ENCODE measurements at regions of chr7 and their contacts with region 1.

Region 1: GRCh38 chr7:157273208-157274093 is 63.4 kb upstream of the DNAJB6 start:
- DNase-seq: peak; percentile 62
- H3K4me3 ChIP-seq: no peak overlapping the region
- H3K27ac ChIP-seq: no peak overlapping the region
- H3K27me3 ChIP-seq: no peaks in the 10 kb centered on the region
- CTCF ChIP-seq: peak; percentile 98

Region 2: GRCh38 chr7:156969972-156970420 is 303.5 kb before region 1 on chr7:
- CTCF ChIA-PET with region 1: interaction called, 67 read pairs
- POLR2A ChIA-PET with region 1: no interaction called
- DNase-seq: no peak
- H3K4me3 ChIP-seq: no peak overlapping the region
- H3K27ac ChIP-seq: no peak overlapping the region
- H3K27me3 ChIP-seq: no peaks in the 10 kb centered on the region
- CTCF ChIP-seq: peak; percentile 33; the same call in 1 of the 2 replicates

Region 3: DNA sequence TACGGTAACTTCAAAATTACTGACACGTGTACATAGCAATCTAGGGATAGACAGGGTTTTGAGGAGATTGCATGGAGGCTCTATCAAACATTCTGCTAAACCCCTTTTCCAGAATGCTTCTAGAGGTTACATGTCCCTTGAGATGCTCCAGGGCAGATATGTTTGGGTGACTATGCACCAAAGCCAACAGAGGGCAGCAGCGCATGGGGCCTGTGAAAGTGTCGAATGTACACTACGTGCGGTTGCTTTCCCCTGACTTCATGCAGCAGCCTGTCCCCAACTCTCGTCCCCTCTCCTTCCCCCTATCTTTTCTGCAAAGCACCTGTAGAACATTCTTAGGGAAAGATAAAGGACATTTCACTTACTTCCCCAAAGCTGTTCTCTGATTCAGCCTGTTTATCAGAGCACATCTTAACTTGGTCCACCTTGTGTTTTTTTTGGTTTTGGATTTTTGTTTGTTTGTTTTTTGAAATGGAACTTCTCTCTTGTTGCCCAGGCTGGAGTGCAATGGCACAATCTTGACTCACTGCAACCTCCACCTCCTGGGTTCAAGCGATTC is 44.5 kb before region 1 on chr7:
- CTCF ChIA-PET with region 1: interaction called, 10 read pairs
- POLR2A ChIA-PET with region 1: no interaction called
- DNase-seq: no peak
- H3K4me3 ChIP-seq: no peak overlapping the region
- H3K27ac ChIP-seq: no peak overlapping the region
- H3K27me3 ChIP-seq: no peaks in the 10 kb centered on the region
- CTCF ChIP-seq: peak; percentile 59

Region 4: DNA sequence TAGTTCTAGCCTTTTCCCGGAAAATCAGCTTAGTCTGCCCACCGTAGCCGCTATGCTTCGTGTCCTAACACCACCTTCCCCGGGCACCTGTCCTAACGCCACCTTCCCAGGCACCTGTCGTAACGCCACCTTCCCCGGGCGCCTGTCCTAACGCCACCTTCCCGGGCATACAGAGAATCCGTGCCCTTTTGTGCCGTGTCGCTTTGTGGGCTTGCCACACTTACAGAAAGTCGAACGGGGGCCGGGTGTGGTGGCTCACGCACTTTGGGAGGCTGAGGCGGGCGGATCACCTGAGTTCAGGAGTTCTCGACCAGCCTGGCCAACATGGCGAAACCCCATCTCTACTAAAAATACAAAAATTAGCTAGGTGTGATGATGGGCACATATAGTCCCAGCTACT is 10.3 kb before region 1 on chr7:
- CTCF ChIA-PET with region 1: interaction called, 12 read pairs
- POLR2A ChIA-PET with region 1: no interaction called
- DNase-seq: no peak
- H3K4me3 ChIP-seq: no peak overlapping the region
- H3K27ac ChIP-seq: no peak overlapping the region
- H3K27me3 ChIP-seq: no peaks in the 10 kb centered on the region
- CTCF ChIP-seq: no peak

Region 5: GRCh38 chr7:157312941-157313340 is 39.5 kb after region 1 on chr7:
- CTCF ChIA-PET with region 1: interaction called, 14 read pairs
- POLR2A ChIA-PET with region 1: no interaction called
- DNase-seq: no peak
- H3K4me3 ChIP-seq: no peak overlapping the region
- H3K27ac ChIP-seq: no peak overlapping the region
- H3K27me3 ChIP-seq: no peaks in the 10 kb centered on the region
- CTCF ChIP-seq: no peak

Region 6: DNA sequence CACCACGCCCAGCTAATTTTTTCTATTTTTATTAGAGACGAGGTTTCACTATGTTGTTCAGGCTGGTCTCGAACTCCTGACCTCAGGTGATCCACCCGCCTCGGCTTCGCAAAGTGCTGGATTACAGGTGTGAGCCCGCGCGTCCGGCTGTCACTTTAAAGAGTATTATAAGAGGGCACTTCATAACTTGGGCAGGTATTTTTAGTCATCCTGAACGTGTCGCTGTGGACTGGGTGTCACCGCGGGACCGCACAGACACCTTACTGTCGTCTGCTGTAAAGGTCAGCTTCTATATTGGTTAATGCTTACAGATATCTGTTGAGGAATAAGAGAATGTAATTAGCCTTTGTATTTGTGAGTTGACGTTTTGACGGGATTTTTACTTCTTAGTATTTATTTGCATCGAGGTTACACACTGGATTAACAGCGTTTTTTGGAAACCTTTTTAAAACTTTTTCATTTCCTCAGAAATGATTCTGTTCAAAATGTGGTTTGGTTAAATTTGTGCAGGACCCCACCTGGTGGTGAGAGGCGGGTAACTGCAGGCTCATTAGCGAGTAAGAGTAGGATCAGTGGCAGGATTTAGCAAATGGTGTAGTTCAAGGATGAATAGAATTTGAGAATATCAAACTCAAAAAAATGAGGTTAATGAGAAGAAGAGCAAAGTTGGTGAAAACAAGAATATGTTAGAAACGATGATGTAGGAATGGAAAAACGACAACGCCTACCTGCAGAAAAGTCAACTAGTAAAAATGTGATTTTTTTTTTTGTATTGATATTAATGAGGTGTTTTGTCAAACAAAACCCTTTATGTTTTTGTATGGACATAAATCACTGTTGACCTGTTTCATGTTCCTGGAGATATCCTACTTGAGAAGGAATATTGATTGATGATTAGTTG is 66.6 kb after region 1 on chr7:
- CTCF ChIA-PET with region 1: interaction called, 19 read pairs
- POLR2A ChIA-PET with region 1: no interaction called
- DNase-seq: no peak
- H3K4me3 ChIP-seq: peak overlapping the region; percentile 11
- H3K27ac ChIP-seq: no peak overlapping the region
- H3K27me3 ChIP-seq: no peaks in the 10 kb centered on the region
- CTCF ChIP-seq: peak; percentile 94